Right lobe of liver (tissue), 6 donors: ENCODE measurements at regions of chr5 and their contacts with region 1.

Region 1: GRCh38 chr5:148730943-148731861 is 76.9 kb upstream of the HTR4 start:
- DNase-seq: peak in 2 of 3 donors; percentile 54 to 77
- ATAC-seq: peak; percentile 95 to 97 (median 96)
- H3K4me3 ChIP-seq: no peak overlapping the region
- H3K27ac ChIP-seq: no peak overlapping the region
- H3K4me1 ChIP-seq: no peaks in the 10 kb centered on the region
- H3K27me3 ChIP-seq: no peaks in the 10 kb centered on the region
- CTCF ChIP-seq: peak; percentile 91 to 99 (median 95)
- POLR2A ChIP-seq: no peak

Region 2: GRCh38 chr5:148443998-148444397 is 287.2 kb before region 1 on chr5:
- intact Hi-C with region 1: loop called (anchors 5 to 10 kb)
- DNase-seq: peak in 1 of 3 donors; percentile 56
- ATAC-seq: peak; percentile 91 to 96 (median 95)
- H3K4me3 ChIP-seq: no peak overlapping the region
- H3K27ac ChIP-seq: no peak overlapping the region
- H3K4me1 ChIP-seq: no peaks in the 10 kb centered on the region
- H3K27me3 ChIP-seq: no peaks in the 10 kb centered on the region
- CTCF ChIP-seq: peak; percentile 71 to 88 (median 74)
- POLR2A ChIP-seq: no peak

Region 3: DNA sequence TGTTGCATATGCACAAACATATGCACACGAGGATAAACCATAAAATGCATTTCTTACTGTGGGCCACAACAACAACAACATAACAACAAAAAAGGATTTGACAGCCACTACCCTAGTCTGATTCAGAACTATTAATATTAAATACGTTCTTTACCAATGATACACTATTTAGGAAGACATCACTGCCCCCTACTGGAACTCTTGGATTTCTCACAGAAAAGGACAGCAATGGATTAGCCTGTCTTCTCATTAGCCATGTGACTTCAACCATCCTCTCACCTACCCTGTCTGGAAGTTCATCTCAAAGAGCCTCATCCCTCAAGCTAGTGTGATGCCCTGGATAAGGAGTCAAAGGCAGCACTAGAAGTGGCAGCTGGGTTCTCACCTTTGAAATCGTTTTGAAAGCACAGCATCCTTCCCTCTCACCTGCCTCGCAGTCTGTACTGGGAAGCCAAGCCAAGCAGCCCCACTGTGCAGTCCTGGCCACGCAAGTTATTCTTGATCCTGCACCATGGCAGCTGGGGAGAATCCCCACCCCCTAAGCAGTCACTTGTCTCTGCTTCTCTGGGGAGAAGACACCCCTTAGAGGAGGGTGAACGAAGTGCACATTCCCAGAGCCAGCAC is 267.1 kb after region 1 on chr5:
- intact Hi-C with region 1: no loop called
- DNase-seq: no peak
- ATAC-seq: peak; percentile 81 to 89 (median 83)
- H3K4me3 ChIP-seq: no peak overlapping the region
- H3K27ac ChIP-seq: no peak overlapping the region
- H3K4me1 ChIP-seq: no peaks in the 10 kb centered on the region
- H3K27me3 ChIP-seq: no peaks in the 10 kb centered on the region
- CTCF ChIP-seq: peak; percentile 68 to 76 (median 74)
- POLR2A ChIP-seq: no peak